MCF 10A (cell line): ENCODE measurements at regions of chr1 and their contacts with region 1.

Region 1: DNA sequence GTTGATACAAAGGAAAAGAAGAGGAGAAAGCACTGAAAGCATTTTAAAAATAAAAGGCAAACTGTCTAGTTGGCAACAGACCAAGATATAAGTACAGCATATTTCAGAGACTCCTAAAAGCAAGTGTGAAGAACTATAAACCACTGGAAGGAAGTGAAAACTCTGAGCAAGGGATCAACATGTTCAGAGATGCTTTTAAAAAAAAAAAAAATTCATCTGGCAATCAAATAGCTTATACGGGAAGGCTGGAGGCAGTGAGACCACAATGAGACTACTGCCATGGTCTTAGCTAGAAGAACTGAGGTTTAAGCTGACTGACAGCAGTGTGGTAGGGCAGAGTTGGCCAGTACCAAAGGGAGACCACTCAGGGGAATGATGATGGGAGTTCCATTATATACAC is 124.3 kb downstream of the VAV3 start:
- DNase-seq: no peak
- H3K4me3 Mint-ChIP-seq: no peak overlapping the region
- H3K27ac Mint-ChIP-seq: no peak overlapping the region
- H3K4me1 Mint-ChIP-seq: peaks cover 9% of the 10 kb centered on the region
- H3K27me3 Mint-ChIP-seq: no peaks in the 10 kb centered on the region
- CTCF ChIP-seq: no peak

Region 2: GRCh38 chr1:107877092-107877491 is 36.4 kb after region 1 on chr1:
- CTCF ChIA-PET with region 1: interaction called, 3 read pairs
- POLR2A ChIA-PET with region 1: interaction called, 11 read pairs
- intact Hi-C with region 1: no loop called
- DNase-seq: peak; percentile 82
- H3K4me3 Mint-ChIP-seq: no peak overlapping the region
- H3K27ac Mint-ChIP-seq: no peak overlapping the region
- H3K4me1 Mint-ChIP-seq: peaks cover 33% of the 10 kb centered on the region
- H3K27me3 Mint-ChIP-seq: no peaks in the 10 kb centered on the region
- CTCF ChIP-seq: no peak

Region 3: DNA sequence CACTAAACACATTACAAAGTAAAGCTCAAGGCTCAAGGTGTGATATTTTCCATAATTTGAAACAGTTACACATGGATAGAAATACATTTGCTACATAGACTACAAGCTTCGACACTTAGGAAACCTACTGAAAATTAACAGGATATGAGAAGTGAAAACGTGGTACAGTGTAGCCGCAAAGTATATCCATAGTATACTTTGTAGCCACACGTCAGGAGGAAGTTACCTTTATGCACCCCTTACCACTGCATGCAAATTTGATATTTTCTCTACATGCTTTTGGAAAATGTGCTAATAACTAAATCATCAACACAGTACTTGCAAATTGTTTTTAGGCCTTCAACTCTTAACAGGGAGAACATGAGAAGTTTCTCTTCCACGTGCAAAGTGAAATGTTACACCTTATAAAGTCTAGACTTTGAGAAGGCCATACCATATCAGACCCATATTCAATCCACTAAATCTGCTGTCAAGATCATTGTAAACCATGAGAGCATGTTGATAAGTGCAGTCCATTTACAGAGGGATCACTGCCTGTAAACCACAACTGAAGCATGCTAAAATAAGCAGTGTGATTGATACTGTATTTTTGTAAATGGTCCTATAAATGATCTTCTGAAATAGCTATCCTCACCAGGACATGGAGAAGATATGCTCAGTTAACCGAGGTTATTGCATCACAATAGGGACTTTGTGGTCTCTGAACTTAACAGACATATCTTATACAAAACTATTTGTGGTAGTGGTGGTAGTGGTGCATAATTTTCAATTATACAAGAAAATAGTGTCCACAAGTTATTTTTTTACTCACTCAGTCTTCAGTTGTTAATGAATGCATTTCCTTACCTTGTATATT is 59.6 kb after region 1 on chr1:
- CTCF ChIA-PET with region 1: no interaction called
- POLR2A ChIA-PET with region 1: no interaction called
- intact Hi-C with region 1: no loop called
- DNase-seq: no peak
- H3K4me3 Mint-ChIP-seq: no peak overlapping the region
- H3K27ac Mint-ChIP-seq: no peak overlapping the region
- H3K4me1 Mint-ChIP-seq: no peaks in the 10 kb centered on the region
- H3K27me3 Mint-ChIP-seq: no peaks in the 10 kb centered on the region
- CTCF ChIP-seq: no peak